ENCODE measurements at regions of chr9 and their contacts with region 1.

Region 1: GRCh38 chr9:99231711-99232110 is 9.6 kb downstream of the SEC61B start:
- DNase-seq: peak; percentile 49
- ATAC-seq: peak; percentile 65; the same call in 1 of the 2 replicates
- H3K4me3 Mint-ChIP-seq: no peak overlapping the region
- H3K27ac Mint-ChIP-seq: no peak overlapping the region
- H3K4me1 Mint-ChIP-seq: no peaks in the 10 kb centered on the region
- H3K27me3 Mint-ChIP-seq: no peaks in the 10 kb centered on the region
- CTCF ChIP-seq: peak; percentile 43; the same call in 1 of the 2 replicates

Region 2: GRCh38 chr9:99259231-99259918 is 27.7 kb after region 1 on chr9:
- CTCF ChIA-PET with region 1: interaction called, 18 read pairs
- POLR2A ChIA-PET with region 1: no interaction called
- DNase-seq: peak; percentile 23
- ATAC-seq: peak; percentile 62
- H3K4me3 Mint-ChIP-seq: no peak overlapping the region
- H3K27ac Mint-ChIP-seq: no peak overlapping the region
- H3K4me1 Mint-ChIP-seq: peaks cover 16% of the 10 kb centered on the region
- H3K27me3 Mint-ChIP-seq: no peaks in the 10 kb centered on the region
- CTCF ChIP-seq: no peak

Region 3: DNA sequence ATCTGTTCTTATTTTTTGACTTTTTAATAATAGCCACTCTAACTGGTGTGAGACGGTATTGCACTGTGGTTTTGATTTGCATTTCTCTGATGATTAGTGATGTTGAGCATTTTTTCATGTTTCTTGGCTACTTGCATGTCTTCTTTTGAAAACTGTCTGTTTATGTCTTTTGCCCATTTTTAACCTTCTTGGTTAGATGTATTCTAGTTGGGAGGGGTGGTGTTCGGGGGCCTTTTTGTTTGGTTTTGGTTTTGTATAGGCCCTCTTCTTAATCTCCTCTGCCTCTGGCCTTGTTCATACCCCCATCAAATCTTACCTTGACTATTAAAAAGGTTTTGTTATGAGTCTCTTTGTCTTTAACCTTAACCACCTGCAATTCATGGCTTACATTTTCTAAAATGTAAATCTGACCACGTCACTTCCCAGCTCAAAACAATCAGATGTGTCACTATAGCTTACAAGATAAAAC is 482.2 kb after region 1 on chr9:
- CTCF ChIA-PET with region 1: no interaction called
- POLR2A ChIA-PET with region 1: no interaction called
- DNase-seq: no peak
- ATAC-seq: no peak
- H3K4me3 Mint-ChIP-seq: no peak overlapping the region
- H3K27ac Mint-ChIP-seq: no peak overlapping the region
- H3K4me1 Mint-ChIP-seq: peaks cover 3% of the 10 kb centered on the region; the same call in 1 of the 2 replicates
- H3K27me3 Mint-ChIP-seq: no peaks in the 10 kb centered on the region
- CTCF ChIP-seq: no peak

Region 4: GRCh38 chr9:100011062-100011681 is 779.5 kb after region 1 on chr9:
- CTCF ChIA-PET with region 1: interaction called, 17 read pairs
- POLR2A ChIA-PET with region 1: no interaction called
- DNase-seq: no peak
- ATAC-seq: 0 out of 2 replicates have a peak, but pooled peaks have one; percentile 30
- H3K4me3 Mint-ChIP-seq: no peak overlapping the region
- H3K27ac Mint-ChIP-seq: no peak overlapping the region
- H3K4me1 Mint-ChIP-seq: no peaks in the 10 kb centered on the region
- H3K27me3 Mint-ChIP-seq: no peaks in the 10 kb centered on the region
- CTCF ChIP-seq: peak; percentile 49; the same call in 1 of the 2 replicates

Measured in WTC11 (cell line).